ENCODE measurements at regions of chr1 and their contacts with region 1.

Region 1: GRCh38 chr1:39919545-39919944 is 17.8 kb upstream of the MYCL start:
- DNase-seq: peak; percentile 33
- H3K4me3 Mint-ChIP-seq: no peak overlapping the region
- H3K27ac Mint-ChIP-seq: no peak overlapping the region
- H3K4me1 Mint-ChIP-seq: no peaks in the 10 kb centered on the region
- H3K27me3 Mint-ChIP-seq: peaks cover 1% of the 10 kb centered on the region

Region 2: DNA sequence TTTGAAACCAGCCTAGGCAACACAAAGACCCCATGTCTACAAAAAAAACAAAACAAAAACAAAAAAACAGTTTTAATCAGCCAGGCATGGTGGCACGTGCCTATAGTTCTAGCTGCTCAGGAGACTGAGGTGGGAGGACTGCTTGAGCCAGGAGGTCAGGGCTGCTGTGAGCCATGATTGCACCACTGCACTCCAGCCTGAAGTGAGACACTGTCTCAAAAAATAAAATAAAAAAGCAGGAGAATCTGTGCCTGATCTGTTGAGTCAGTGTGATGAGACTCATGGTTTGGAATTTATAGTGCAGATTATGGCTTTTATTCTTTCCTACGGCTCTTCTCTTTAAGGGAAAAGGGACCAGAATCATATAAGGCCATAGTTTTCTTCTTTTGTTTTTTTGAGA is 52.8 kb before region 1 on chr1:
- CTCF ChIA-PET with region 1: no interaction called
- POLR2A ChIA-PET with region 1: no interaction called
- DNase-seq: no peak
- H3K4me3 Mint-ChIP-seq: no peak overlapping the region
- H3K27ac Mint-ChIP-seq: no peak overlapping the region
- H3K4me1 Mint-ChIP-seq: no peaks in the 10 kb centered on the region
- H3K27me3 Mint-ChIP-seq: no peaks in the 10 kb centered on the region

Region 3: DNA sequence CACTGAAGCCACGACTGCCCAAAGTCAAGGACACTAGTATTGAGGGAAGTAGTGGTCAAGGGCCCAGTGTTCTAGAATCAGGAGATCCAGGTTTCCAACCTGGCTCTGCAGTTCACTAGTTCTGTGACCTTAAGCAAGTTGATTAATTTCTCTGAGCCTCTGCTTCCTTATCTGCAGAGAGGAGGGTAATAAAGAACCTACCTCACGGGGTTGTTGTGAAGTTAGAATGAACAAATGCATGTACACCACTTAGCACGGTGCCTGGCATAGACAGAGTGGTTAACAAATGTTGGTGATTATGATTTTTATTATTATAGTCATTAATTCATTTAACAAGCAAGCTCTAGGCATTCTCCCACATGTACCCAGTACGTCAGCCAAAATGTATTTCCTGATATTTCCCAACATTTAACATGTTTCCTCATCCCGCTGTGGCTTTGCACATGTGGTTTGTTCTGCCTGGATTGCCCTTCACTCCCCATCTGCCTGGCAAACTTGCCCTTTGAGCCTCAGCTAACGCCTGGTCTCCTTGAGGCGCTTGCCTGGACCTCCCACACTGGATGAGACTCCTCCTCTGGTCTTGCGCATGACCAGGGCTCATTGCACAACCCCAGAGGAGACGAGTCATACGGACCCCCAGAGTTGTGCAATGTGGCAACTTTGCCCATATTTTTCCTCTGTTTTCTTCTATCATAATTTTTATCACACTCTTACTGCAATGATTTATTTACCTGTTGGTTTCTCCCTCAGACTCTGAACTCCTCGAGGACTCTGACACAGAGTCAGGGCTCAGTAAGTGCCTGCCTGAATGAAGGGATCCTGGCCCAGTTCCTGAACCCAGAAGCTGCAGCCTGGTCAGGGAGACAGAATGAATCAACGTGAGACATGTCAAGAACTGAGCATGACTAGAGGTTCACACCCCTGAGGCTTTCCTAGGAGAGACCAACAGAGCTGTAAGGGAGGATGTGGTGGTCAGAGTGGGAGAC is 14.7 kb after region 1 on chr1:
- CTCF ChIA-PET with region 1: interaction called, 10 read pairs
- POLR2A ChIA-PET with region 1: no interaction called
- DNase-seq: no peak
- H3K4me3 Mint-ChIP-seq: no peak overlapping the region
- H3K27ac Mint-ChIP-seq: no peak overlapping the region
- H3K4me1 Mint-ChIP-seq: no peaks in the 10 kb centered on the region
- H3K27me3 Mint-ChIP-seq: peaks cover 4% of the 10 kb centered on the region

Region 4: DNA sequence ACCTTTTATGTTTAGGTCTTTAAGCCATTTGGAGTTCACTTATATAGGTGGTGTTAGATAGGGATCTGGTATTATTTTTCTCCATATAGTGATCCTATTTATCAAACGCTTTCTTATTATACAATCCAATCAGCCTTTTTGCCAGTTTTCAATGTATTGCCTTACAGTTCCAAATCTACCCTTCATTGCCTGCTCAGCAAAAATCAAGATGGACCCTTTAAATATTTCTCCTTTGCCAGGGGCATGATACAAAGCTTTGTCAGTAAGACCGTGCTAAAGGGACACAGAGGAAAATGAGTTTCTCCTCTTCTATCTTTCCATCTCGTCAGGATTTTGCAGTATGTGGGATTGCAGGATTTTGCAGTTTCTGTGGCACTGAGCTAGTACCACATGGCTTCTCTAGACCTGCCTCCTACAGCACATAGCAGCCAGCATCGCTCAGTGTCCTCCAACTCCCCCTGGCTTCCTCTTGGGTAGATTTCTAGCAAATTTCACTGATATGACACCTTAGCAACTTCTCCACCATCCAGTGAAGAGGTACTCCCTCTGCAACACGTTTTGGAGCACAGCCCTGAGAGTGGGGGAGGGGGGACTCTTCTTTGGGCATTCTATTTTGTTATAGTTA is 98.5 kb after region 1 on chr1:
- CTCF ChIA-PET with region 1: no interaction called
- POLR2A ChIA-PET with region 1: no interaction called
- DNase-seq: no peak
- H3K4me3 Mint-ChIP-seq: no peak overlapping the region
- H3K27ac Mint-ChIP-seq: no peak overlapping the region
- H3K4me1 Mint-ChIP-seq: peaks cover 14% of the 10 kb centered on the region
- H3K27me3 Mint-ChIP-seq: peaks cover 7% of the 10 kb centered on the region

Measured in activated CD4-positive, alpha-beta memory T cell treated with anti-CD3 and anti-CD28 coated beads, Interleukin-2, amount 10 ng/mL, durations not matched to agents 7 days and 5 days (primary cell).